Mammary epithelial cell (primary cell): ENCODE measurements at regions of chrX and their contacts with region 1.

Region 1: DNA sequence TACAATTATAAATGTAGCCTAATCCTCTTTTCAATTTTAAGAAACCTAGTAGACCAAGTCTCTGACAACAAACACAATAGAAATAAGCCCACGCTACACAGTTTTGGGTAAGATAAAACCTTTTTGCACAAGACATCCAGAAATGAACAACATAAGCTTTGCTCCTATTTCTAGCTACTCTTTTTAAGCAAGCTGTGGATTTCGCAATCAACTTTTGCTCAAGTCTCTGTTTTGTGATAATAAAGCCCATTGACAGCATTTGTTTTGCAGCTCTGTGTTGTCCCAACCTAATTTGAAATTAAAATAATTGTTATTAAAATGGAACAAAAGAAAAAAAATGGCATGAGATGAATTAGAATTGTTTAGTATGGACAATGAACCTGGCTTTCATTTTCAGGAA is 287.9 kb upstream of the PUDP start:
- DNase-seq: no peak
- H3K4me3 ChIP-seq: no peak overlapping the region
- H3K27ac ChIP-seq: no peak overlapping the region
- H3K4me1 ChIP-seq: peaks cover 20% of the 10 kb centered on the region
- H3K27me3 ChIP-seq: no peaks in the 10 kb centered on the region
- CTCF ChIP-seq: no peak

Region 2: DNA sequence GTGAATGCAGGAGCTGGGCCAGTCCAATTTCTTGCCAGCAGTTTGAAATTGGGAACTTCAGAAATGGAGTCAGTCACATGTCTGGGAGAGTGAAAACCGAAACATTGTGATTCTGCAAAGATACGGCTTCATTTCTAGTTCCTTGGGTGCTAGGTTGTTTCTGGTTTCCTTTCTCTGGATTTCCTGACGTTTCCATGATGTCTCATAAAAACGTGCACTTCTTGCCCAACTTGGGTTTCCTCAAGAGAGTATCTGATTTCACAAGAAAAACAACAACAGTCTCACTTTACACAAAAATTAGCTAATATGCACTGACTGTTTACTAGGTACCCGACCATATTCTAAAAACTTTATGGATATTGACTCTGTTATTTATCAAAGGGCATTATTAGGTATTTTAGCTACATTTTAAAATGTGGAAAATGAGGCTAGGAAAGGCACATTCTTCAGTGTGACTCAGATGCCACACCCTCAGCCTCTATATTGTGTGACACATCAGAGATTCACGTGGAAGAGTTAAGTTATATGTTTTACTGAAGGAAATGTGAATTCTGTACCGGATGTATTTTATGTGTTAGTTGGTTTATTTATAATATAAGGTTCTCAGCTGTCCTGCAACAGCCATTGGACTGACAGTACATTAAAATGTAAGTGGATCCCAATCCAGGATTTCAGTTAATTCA is 62.8 kb before region 1 on chrX:
- CTCF ChIA-PET with region 1: no interaction called
- dilution Hi-C with region 1: loop called (anchors 5 kb)
- in situ Hi-C with region 1: no loop called
- intact Hi-C with region 1: no loop called
- DNase-seq: peak; percentile 71
- H3K4me3 ChIP-seq: no peak overlapping the region
- H3K27ac ChIP-seq: peak overlapping the region; percentile 88
- H3K4me1 ChIP-seq: peaks cover 14% of the 10 kb centered on the region
- H3K27me3 ChIP-seq: no peaks in the 10 kb centered on the region
- CTCF ChIP-seq: no peak